Endothelial cell of umbilical vein (primary cell): ENCODE measurements at regions of chr3 and their contacts with region 1.

Region 1: GRCh38 chr3:52809662-52810377 is 15.2 kb downstream of the ITIH3 start:
- DNase-seq: no peak
- H3K4me3 ChIP-seq: no peak overlapping the region
- H3K27ac ChIP-seq: no peak overlapping the region
- H3K4me1 ChIP-seq: no peaks in the 10 kb centered on the region
- H3K27me3 ChIP-seq: no peaks in the 10 kb centered on the region
- CTCF ChIP-seq: no peak
- POLR2A ChIP-seq: no peak

Region 2: GRCh38 chr3:52798978-52799476 is 10.8 kb before region 1 on chr3:
- CTCF ChIA-PET with region 1: interaction called, 13 read pairs
- POLR2A ChIA-PET with region 1: no interaction called
- dilution Hi-C with region 1: no loop called
- intact Hi-C with region 1: no loop called
- DNase-seq: peak; percentile 18
- H3K4me3 ChIP-seq: no peak overlapping the region
- H3K27ac ChIP-seq: no peak overlapping the region
- H3K4me1 ChIP-seq: no peaks in the 10 kb centered on the region
- H3K27me3 ChIP-seq: no peaks in the 10 kb centered on the region
- CTCF ChIP-seq: peak; percentile 57 to 61
- POLR2A ChIP-seq: no peak

Region 3: DNA sequence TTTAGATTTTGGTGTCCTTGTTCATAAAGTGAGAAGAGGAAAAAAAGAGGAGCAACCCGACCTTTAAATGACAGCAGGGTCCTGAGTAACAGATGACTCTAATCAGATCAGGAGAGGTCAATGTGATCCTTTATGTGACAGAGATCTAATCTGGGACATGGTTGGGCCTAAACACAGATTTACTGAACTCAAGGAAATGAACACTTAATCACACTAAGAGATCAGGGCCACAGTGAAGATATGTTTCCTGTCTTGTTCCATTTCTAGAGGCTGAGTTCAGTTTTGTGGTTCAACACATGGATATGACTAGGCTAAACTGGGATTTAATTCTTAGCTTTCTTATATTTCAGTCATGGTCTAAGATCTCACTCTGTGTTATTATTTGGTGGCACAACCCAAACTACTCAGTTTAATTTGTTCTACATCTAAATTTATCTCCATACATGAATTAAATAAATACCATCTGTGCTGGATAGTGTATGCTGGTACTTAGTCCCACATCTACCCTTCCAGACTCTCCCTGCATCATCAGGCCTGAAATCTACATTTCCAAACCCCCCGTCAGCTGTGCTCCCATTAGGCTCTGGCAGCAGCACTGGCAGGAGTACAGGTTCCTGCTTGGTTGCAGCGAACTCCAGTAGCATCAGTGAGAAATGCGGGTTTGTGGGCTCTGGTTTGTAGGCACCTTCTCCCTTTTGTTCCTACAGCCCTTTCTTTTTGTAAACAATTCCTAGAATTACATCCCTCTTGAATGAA is 213.4 kb after region 1 on chr3:
- CTCF ChIA-PET with region 1: no interaction called
- POLR2A ChIA-PET with region 1: no interaction called
- dilution Hi-C with region 1: no loop called
- intact Hi-C with region 1: no loop called
- DNase-seq: peak; percentile 31
- H3K4me3 ChIP-seq: no peak overlapping the region
- H3K27ac ChIP-seq: no peak overlapping the region
- H3K4me1 ChIP-seq: peaks cover 16% of the 10 kb centered on the region
- H3K27me3 ChIP-seq: no peaks in the 10 kb centered on the region
- CTCF ChIP-seq: no peak
- POLR2A ChIP-seq: no peak